ENCODE measurements at regions of chr15 and their contacts with region 1.

Region 1: DNA sequence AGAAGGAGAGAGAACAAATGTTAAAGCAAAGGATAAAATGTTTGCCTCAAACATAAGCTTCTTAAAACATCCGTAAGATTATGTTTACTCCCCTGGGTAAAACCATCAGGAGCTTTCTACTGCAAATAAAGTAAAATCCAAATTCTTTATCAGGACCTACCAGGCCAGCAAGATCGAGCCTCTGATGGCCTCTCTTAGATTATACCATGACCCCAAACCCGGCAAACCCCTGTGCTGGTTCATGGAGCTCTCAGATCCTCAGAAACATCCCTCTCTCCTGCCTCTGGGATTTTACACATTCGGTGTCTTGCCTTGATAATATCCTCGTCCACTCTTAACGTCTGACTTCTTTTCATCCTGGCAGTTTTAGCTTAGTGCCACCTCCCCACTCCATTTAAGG is 7.5 kb upstream of the TARS3 start:
- DNase-seq: no peak
- CTCF ChIP-seq: no peak

Region 2: DNA sequence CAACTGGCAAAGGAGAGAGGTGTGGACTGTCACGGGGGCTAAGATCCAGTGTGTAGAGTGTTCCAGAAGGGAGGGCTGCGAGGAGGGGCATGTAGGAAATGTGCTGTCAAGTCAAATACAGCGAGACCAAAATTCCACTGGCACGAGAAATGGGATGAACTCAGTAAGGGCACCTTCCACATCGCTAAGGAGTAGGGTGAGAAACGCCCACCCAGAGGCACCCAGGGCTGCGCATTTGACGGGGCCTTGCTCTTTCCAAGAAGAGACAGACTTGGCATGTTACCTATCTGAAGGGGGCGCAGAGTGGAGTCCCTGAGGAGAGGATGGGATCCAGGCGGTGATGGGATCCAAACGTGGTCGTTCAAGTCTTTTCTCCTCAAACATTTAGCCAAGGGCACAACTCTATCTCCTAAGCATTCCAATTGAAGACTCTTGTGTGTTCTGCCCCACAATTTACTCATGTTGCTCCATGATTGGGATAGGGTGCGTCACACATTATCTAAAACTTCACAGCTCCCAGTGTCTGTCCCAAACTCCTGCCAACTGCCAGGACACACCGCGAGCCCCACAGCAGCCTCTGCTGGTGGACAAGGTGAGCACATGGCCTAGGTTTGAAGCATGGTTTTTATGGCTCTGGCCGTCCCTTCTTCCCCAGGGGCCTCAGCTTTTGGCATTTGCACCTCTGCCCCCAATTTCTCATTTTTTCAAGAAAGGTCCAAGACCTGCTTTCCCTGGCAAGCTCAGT is 462.1 kb before region 1 on chr15:
- in situ Hi-C with region 1: no loop called
- DNase-seq: no peak
- CTCF ChIP-seq: peak; percentile 51

Region 3: GRCh38 chr15:101625980-101626379 is 105.8 kb before region 1 on chr15:
- in situ Hi-C with region 1: no loop called
- DNase-seq: no peak
- CTCF ChIP-seq: no peak

Region 4: GRCh38 chr15:101675796-101676582 is 55.8 kb before region 1 on chr15:
- in situ Hi-C with region 1: loop called (anchors 10 kb)
- DNase-seq: no peak
- CTCF ChIP-seq: no peak

Measured in GM13977 (cell line).